ENCODE measurements at regions of chr9 and their contacts with region 1.

Region 1: DNA sequence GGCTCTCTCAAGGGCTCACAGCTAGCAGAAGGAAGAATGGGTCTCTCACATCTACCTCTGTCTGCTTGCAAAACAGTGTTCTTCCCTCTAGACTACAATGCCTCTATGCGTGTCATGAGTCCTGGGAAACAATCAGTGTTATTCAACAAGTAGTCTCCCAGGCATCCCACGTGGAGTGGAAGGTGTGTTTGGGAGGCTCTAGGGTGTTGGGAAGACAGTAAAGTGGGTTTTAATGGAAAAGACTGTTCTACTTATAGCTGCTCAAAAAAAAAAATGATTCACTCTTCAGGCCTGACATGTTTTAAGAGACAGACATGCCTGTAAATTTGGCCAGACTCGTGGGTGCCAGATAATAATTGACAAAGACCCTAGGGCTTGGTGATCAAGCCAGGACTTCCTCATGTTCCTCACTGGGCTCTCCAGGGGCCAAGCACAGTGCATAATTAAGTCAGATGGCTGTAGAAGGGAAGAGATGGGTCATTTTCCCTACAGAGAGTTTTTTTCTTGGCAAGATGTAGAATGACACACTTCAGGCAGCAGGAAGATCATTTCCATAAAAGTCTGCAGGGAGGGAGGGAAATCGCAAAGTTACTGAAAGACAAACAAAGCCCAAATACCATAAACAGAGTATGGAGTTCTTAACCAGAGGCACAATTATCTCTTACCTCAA is 246.4 kb downstream of the ACTL7B start:
- DNase-seq: no peak
- H3K4me3 ChIP-seq: no peak overlapping the region
- H3K27ac ChIP-seq: no peak overlapping the region
- H3K4me1 ChIP-seq: no peaks in the 10 kb centered on the region
- H3K27me3 ChIP-seq: no peaks in the 10 kb centered on the region
- CTCF ChIP-seq: no peak

Region 2: GRCh38 chr9:108410161-108410560 is 199.2 kb before region 1 on chr9:
- CTCF ChIA-PET with region 1: no interaction called
- POLR2A ChIA-PET with region 1: no interaction called
- intact Hi-C with region 1: no loop called
- DNase-seq: no peak
- H3K4me3 ChIP-seq: no peak overlapping the region
- H3K27ac ChIP-seq: no peak overlapping the region
- H3K4me1 ChIP-seq: no peaks in the 10 kb centered on the region
- H3K27me3 ChIP-seq: no peaks in the 10 kb centered on the region
- CTCF ChIP-seq: 0 out of 2 replicates have a peak, but pooled peaks have one; percentile 28

Region 3: GRCh38 chr9:109082091-109082620 is 472.8 kb after region 1 on chr9:
- CTCF ChIA-PET with region 1: no interaction called
- POLR2A ChIA-PET with region 1: interaction called, 13 read pairs
- intact Hi-C with region 1: no loop called
- DNase-seq: no peak
- H3K4me3 ChIP-seq: no peak overlapping the region
- H3K27ac ChIP-seq: no peak overlapping the region
- H3K4me1 ChIP-seq: peaks cover 23% of the 10 kb centered on the region
- H3K27me3 ChIP-seq: no peaks in the 10 kb centered on the region
- CTCF ChIP-seq: no peak

Measured in PC-9 (cell line).